CD4-positive, alpha-beta memory T cell (primary cell): ENCODE measurements at regions of chr17 and their contacts with region 1.

Region 1: DNA sequence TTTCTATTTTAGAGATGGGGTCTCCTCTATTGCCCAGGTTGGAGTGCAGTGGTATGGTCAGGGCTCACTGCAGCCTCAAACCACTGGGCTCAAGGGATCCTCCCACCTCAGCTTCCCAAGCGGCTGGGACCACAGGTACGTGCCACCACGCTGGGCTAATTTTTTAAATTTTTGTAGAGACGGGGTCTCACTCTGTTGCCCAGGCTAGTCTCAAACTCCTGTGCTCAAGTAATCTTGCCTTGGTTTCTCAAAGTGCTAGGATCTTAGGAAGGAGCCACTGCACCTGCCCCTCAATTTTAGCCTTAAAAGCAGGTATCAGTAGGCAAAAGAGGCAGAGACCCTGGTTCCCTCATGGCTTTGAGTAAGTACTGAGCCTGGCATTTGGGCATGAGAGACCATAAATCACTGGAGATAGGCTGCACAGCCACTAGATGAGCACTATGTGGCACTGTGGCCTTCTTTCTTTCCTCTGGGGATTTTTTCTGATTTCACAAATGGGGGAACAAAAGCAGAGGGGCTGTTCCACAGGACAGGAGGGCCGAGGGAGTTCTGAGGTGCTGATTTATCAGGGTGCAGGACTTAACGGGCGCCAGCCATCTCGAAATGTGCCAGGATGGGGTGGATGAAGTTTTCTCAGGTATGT is 82.2 kb downstream of the PLXDC1 start:
- DNase-seq: peak in 4 of 5 donors; percentile 44 to 55 (median 52)
- H3K4me3 ChIP-seq: no peak overlapping the region
- H3K4me3 Mint-ChIP-seq: peak overlapping the region in 1 of 8 donors; percentile 3
- H3K27ac ChIP-seq: no peak overlapping the region
- H3K27ac Mint-ChIP-seq: peak overlapping the region in 4 of 7 donors; percentile 41 to 75 (median 54)
- H3K4me1 ChIP-seq: no peaks in the 10 kb centered on the region
- H3K4me1 Mint-ChIP-seq: peaks cover 4 to 9% (median 5%) of the 10 kb centered on the region in 4 donors
- H3K27me3 ChIP-seq: no peaks in the 10 kb centered on the region
- H3K27me3 Mint-ChIP-seq: peaks cover 0 to 2% of the 10 kb centered on the region in 2 donors

Region 2: GRCh38 chr17:39094607-39095308 is 25.5 kb after region 1 on chr17:
- CTCF ChIA-PET with region 1: interaction called, 7 read pairs
- POLR2A ChIA-PET with region 1: no interaction called
- intact Hi-C with region 1: loop called (anchors 2 kb)
- DNase-seq: peak; percentile 32 to 74 (median 69)
- H3K4me3 ChIP-seq: peak overlapping the region in 1 of 2 donors; percentile 29
- H3K4me3 Mint-ChIP-seq: peak overlapping the region; percentile 72 to 91 (median 84)
- H3K27ac ChIP-seq: peak overlapping the region; percentile 42
- H3K27ac Mint-ChIP-seq: peak overlapping the region; percentile 82 to 98 (median 96)
- H3K4me1 ChIP-seq: peaks cover 89% of the 10 kb centered on the region
- H3K4me1 Mint-ChIP-seq: peaks cover 65 to 87% (median 75%) of the 10 kb centered on the region in 4 donors
- H3K27me3 ChIP-seq: no peaks in the 10 kb centered on the region
- H3K27me3 Mint-ChIP-seq: no peaks in the 10 kb centered on the region